Heart right ventricle (tissue), 16 donors: ENCODE measurements at regions of chr17 and their contacts with region 1.

Region 1: GRCh38 chr17:28763804-28764266 is 20.0 kb downstream of the TRAF4 start:
- DNase-seq: peak in 1 of 2 donors; percentile 83
- ATAC-seq: peak in 6 of 8 donors; percentile 25 to 59 (median 37)
- H3K4me3 ChIP-seq: no peak overlapping the region
- H3K27ac ChIP-seq: no peak overlapping the region
- H3K4me1 ChIP-seq: peaks cover 2 to 29% (median 26%) of the 10 kb centered on the region in 9 donors
- H3K27me3 ChIP-seq: no peaks in the 10 kb centered on the region
- CTCF ChIP-seq: peak; percentile 77 to 94 (median 91)

Region 2: DNA sequence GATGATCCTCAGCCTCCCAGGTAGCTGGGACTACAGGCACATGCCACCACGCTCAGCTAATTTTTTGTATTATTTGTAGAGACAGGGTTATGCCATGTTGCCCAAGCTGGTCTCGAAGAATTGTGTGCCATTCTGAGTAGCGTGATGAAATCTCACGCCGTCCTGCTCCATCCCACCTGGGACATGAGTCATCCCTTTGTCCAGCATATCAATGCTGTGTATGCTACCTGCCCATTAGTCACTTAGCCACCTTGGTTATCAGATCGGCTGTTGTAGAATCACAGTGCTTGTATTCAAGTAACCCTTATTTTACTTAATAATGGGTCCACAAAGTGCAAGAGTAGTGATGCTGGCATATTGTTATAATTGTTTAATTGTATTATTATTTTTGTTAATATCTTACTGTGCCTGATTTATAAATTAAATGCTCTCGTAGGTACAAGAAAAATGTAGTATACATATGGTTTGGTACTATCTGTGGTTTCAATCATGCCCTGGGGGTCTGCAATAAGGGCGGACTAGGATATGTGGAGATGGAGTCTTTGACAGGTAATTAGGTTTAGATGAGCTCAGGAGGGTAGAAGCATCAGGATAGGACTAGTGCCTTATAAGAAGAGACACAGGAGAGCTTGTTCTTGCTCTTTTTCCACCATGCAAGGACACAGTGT is 317.0 kb before region 1 on chr17:
- intact Hi-C with region 1: no loop called
- DNase-seq: no peak
- ATAC-seq: no peak
- H3K4me3 ChIP-seq: no peak overlapping the region
- H3K27ac ChIP-seq: no peak overlapping the region
- H3K4me1 ChIP-seq: no peaks in the 10 kb centered on the region
- H3K27me3 ChIP-seq: peaks cover 0 to 14% (median 0%) of the 10 kb centered on the region in 7 donors
- CTCF ChIP-seq: no peak

Region 3: DNA sequence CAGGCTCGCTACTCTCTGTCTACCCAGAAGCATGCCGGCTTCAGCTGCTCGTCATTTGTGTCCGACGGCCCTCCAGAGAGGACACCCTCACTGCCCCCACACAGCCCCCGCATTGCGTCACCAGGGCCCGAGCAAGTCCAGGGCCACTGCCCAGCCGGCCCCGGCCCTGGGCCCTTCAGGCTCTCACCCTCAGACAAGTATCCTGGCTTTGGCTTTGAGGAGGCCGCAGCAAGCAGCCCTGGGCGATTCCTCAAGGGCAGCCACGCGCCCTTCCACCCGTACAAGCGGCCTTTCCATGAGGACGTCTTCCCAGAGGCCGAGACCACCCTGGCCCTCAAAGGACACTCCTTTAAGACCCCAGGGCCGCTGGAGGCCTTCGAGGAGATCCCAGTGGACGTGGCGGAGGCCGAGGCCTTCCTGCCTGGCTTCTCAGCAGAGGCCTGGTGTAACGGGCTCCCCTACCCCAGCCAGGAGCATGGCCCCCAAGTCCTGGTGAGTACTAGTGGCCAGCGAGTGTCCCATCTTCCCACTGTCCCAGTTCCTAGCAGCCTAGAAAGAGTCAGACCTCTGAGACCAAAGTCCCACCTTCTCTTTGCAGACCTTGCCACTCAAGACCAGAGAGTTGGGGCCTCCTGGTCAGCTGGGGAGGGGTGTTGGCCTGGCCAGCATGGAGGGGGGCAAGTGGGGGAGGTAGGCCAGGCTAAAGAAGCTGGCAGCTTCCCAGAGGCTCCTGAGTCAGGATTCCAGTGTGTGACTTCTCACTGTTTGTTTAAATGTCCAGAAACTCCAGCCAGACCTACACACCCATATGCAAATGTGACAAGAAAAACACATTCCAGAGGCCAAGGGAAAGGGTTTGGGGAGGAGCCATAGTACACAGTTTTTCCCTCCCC is 239.1 kb before region 1 on chr17:
- intact Hi-C with region 1: no loop called
- DNase-seq: no peak
- ATAC-seq: no peak
- H3K4me3 ChIP-seq: no peak overlapping the region
- H3K27ac ChIP-seq: no peak overlapping the region
- H3K4me1 ChIP-seq: no peaks in the 10 kb centered on the region
- H3K27me3 ChIP-seq: peaks cover 0 to 5% (median 0%) of the 10 kb centered on the region in 7 donors
- CTCF ChIP-seq: no peak

Region 4: GRCh38 chr17:28710861-28711722 is 52.7 kb before region 1 on chr17:
- intact Hi-C with region 1: no loop called
- DNase-seq: peak; percentile 86 to 92
- ATAC-seq: peak; percentile 93 to 96 (median 94)
- H3K4me3 ChIP-seq: peak overlapping the region; percentile 45 to 88 (median 66)
- H3K27ac ChIP-seq: peak overlapping the region; percentile 68 to 95 (median 90)
- H3K4me1 ChIP-seq: peaks cover 0 to 28% (median 18%) of the 10 kb centered on the region in 9 donors
- H3K27me3 ChIP-seq: no peaks in the 10 kb centered on the region
- CTCF ChIP-seq: no peak

Region 5: DNA sequence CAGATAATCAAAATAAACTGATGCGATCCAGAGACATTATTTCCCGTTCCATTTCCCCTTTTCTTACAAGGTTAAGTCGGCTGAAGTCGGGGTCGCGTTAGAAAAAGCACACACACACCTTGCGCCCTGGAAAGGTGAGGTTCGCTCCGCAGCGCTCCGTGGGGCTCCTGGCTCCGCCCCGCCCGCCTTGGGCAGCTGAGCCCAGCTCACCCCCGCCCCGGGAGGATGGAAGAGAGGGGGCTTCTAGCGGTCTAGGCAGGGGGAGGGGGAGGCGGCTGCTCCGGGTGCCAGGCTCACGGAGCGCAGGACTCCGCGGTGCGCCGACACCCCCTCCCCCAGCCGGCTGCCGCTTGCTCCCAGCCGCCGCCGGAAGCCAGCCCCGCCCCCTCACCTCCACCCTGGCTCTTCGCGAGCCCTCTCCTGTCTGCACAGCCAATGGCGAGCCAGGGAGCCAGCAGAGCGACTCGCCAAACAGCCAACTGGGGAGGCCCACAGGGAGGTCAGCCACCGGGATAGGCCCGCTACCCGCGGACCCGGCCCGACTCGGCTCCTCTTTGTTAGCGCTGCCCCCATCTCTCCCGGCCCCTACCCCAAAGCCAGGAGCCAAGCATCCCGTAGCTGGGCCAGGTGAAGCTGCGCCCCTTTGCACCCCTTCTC is 48.4 kb after region 1 on chr17:
- intact Hi-C with region 1: loop called in 3 of 10 experiments (anchors 5 to 10 kb)
- DNase-seq: peak; percentile 98
- ATAC-seq: peak; percentile 100
- H3K4me3 ChIP-seq: peak overlapping the region; percentile 71 to 98 (median 93)
- H3K27ac ChIP-seq: peak overlapping the region; percentile 23 to 92 (median 87)
- H3K4me1 ChIP-seq: peaks cover 0 to 50% (median 36%) of the 10 kb centered on the region in 9 donors
- H3K27me3 ChIP-seq: no peaks in the 10 kb centered on the region
- CTCF ChIP-seq: no peak

Region 6: GRCh38 chr17:28854457-28855350 is 90.9 kb after region 1 on chr17 and contains the start of gene ERAL1:
- intact Hi-C with region 1: loop called in 5 of 10 experiments (anchors 5 to 10 kb)
- DNase-seq: peak; percentile 76 to 87
- ATAC-seq: peak; percentile 98 to 100 (median 99)
- H3K4me3 ChIP-seq: peak within 1 kb of the TSS; percentile 68 to 98 (median 80)
- H3K27ac ChIP-seq: peak within 1 kb of the TSS; percentile 44 to 87 (median 75)
- H3K4me1 ChIP-seq: peaks cover 5 to 16% (median 12%) of the 10 kb centered on the region in 9 donors
- H3K27me3 ChIP-seq: no peaks in the 10 kb centered on the region
- CTCF ChIP-seq: no peak
- total RNA-seq, gene ERAL1: 34.2 to 41.6 (median 39.2) TPM

Region 7: DNA sequence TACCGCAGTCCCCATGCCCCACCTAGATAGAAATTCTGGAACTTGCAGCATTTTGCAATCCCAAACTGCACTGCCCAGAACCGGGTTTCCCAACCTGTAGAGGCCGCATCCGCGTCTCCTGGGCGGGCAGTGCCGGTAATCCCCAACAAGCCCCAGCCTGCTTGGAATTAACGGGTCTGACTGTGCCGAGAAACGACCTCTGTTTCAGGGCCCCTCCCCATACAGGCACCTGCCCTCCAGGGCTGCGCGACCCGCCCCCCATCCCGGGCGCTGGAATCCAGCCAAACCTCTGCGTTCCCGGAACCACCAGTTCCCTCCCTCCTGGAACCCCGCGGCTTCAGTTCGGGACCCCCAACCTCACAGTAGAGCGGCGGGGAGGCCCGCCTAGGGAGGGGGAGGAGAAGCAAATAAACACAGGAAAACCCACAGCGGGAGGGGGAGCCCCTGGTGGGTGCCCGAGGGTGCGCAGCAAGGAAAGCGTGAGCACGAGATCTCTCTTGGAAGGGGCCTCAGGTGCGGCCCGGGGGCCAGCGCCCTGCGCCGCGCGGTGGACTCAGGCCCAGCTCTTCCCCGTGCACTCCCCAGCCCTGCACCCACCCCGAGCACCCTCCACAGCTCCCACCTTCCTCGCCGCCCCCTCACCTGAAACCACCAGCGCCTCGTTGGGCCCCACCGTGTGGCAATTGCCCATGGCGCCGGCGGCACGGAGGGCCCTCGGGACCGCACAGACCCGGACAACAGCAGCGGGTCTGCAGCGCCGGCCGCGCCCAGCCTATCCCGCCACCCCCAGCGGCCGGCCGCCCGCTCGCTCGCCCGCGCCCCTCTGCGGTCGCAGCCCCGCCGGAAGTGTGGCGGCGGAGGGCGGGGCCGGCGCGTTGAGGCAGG is 133.3 kb after region 1 on chr17 and contains the start of gene FLOT2:
- intact Hi-C with region 1: loop called in 6 of 10 experiments (anchors 5 to 10 kb)
- DNase-seq: peak; percentile 47 to 64
- ATAC-seq: peak; percentile 77 to 91 (median 82)
- H3K4me3 ChIP-seq: peak within 1 kb of the TSS; percentile 65 to 98 (median 90)
- H3K27ac ChIP-seq: peak within 1 kb of the TSS; percentile 74 to 97 (median 91)
- H3K4me1 ChIP-seq: peaks cover 7 to 61% (median 44%) of the 10 kb centered on the region in 9 donors
- H3K27me3 ChIP-seq: no peaks in the 10 kb centered on the region
- CTCF ChIP-seq: peak in 4 of 9 donors; percentile 17 to 51 (median 39)
- total RNA-seq, gene FLOT2: 82.8 to 159 (median 90.7) TPM

Region 8: GRCh38 chr17:28916302-28916934 is 152.6 kb after region 1 on chr17:
- intact Hi-C with region 1: loop called in 6 of 10 experiments (anchors 2 to 10 kb)
- DNase-seq: no peak
- ATAC-seq: peak in 6 of 8 donors; percentile 61 to 80 (median 70)
- H3K4me3 ChIP-seq: no peak overlapping the region
- H3K27ac ChIP-seq: peak overlapping the region in 2 of 10 donors; percentile 5 to 34
- H3K4me1 ChIP-seq: peaks cover 0 to 16% (median 0%) of the 10 kb centered on the region in 9 donors
- H3K27me3 ChIP-seq: no peaks in the 10 kb centered on the region
- CTCF ChIP-seq: peak in 8 of 9 donors; percentile 50 to 78 (median 72)

Region 9: GRCh38 chr17:29341751-29342150 is 577.9 kb after region 1 on chr17:
- intact Hi-C with region 1: no loop called
- DNase-seq: no peak
- ATAC-seq: no peak
- H3K4me3 ChIP-seq: no peak overlapping the region
- H3K27ac ChIP-seq: no peak overlapping the region
- H3K4me1 ChIP-seq: peaks cover 0 to 8% (median 0%) of the 10 kb centered on the region in 9 donors
- H3K27me3 ChIP-seq: peaks cover 0 to 9% (median 0%) of the 10 kb centered on the region in 7 donors
- CTCF ChIP-seq: no peak